ENCODE measurements at regions of chr12 and their contacts with region 1.

Region 1: DNA sequence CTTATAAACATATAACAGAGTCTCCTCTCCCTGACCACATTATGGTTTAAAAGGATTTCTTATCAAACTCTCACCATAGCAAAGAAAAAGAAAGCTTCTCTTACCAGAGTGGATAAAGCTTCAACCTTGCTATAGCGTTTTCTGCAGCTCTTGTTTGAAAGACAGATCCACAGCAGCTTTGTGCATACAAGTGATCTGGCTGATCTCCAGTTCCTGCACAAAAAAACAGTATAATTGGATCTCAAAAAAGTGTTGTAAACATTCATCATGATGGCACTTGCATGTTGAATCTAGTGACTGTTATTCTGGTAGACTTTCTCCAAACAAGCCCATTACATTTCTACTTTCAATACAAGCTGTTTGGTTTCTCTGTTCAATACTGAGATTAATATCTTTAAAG is 178.9 kb upstream of the MGAT4C start:
- DNase-seq: no peak
- H3K4me3 ChIP-seq: no peak overlapping the region
- H3K27ac ChIP-seq: no peak overlapping the region
- H3K4me1 ChIP-seq: no peaks in the 10 kb centered on the region
- H3K27me3 ChIP-seq: no peaks in the 10 kb centered on the region
- CTCF ChIP-seq: no peak
- POLR2A ChIP-seq: no peak

Region 2: DNA sequence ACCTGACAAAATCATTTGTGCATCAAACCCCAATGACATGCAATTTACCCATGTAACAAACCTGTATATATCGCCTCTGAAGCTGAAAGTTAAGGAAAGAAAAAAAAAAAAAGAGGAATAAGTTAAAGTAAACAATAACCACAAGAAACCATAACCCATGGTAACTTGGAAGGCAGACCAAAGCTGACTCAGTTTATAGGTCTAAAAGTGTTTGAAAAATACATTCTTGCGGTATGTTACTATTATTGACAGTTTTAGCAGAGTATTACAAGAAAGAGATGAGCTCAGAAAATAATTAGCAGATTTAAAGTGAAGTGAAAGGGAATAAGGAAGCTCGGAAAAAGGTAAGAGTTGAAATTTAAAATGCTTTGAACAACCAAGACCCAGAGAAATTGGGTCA is 144.4 kb before region 1 on chr12:
- CTCF ChIA-PET with region 1: no interaction called
- POLR2A ChIA-PET with region 1: no interaction called
- dilution Hi-C with region 1: no loop called
- intact Hi-C with region 1: no loop called
- DNase-seq: no peak
- H3K4me3 ChIP-seq: no peak overlapping the region
- H3K27ac ChIP-seq: no peak overlapping the region
- H3K4me1 ChIP-seq: no peaks in the 10 kb centered on the region
- H3K27me3 ChIP-seq: no peaks in the 10 kb centered on the region
- CTCF ChIP-seq: no peak
- POLR2A ChIP-seq: no peak

Region 3: GRCh38 chr12:86376052-86376451 is 59.0 kb before region 1 on chr12:
- CTCF ChIA-PET with region 1: no interaction called
- POLR2A ChIA-PET with region 1: no interaction called
- dilution Hi-C with region 1: no loop called
- intact Hi-C with region 1: no loop called
- DNase-seq: no peak
- H3K4me3 ChIP-seq: no peak overlapping the region
- H3K27ac ChIP-seq: no peak overlapping the region
- H3K4me1 ChIP-seq: no peaks in the 10 kb centered on the region
- H3K27me3 ChIP-seq: no peaks in the 10 kb centered on the region
- CTCF ChIP-seq: no peak
- POLR2A ChIP-seq: no peak

Region 4: DNA sequence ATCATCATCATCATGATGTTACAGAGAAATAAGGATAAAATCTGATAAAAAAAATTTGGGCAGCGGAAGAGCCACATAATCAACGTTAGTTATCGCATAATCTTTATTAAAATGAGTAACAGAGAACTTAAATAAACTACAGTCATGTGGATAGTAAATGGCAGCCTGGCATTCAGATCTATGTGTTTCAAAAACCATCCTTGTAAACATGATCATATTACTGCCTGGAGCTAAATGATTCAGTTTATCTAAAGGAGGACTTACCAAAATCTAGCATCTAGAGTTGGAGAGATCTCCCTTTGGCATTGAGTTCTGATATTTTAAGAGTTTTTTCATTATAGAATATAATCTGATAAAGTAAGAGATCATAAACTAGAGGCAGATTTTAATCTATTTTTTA is 21.2 kb after region 1 on chr12:
- CTCF ChIA-PET with region 1: no interaction called
- POLR2A ChIA-PET with region 1: no interaction called
- dilution Hi-C with region 1: no loop called
- intact Hi-C with region 1: no loop called
- DNase-seq: no peak
- H3K4me3 ChIP-seq: no peak overlapping the region
- H3K27ac ChIP-seq: no peak overlapping the region
- H3K4me1 ChIP-seq: no peaks in the 10 kb centered on the region
- H3K27me3 ChIP-seq: no peaks in the 10 kb centered on the region
- CTCF ChIP-seq: no peak
- POLR2A ChIP-seq: no peak

Region 5: DNA sequence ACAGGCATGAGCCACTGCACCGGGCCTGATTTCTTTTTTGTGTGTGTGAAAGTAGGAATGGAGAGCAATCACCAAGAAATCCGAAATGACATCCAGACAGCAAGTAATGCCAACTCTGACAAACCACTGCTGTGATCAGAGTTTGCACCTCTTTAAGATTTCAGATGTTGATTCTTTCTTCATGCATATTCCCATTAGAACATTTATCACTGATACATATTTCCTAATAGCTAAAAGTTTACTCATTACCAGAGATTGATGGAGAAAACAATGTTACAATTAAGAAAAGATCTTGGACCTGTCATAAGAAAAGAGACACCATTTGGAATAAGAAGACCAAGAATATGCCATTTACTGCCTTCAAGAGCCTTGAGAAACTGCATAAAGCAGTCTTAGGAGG is 38.2 kb after region 1 on chr12:
- CTCF ChIA-PET with region 1: interaction called, 3 read pairs
- POLR2A ChIA-PET with region 1: no interaction called
- dilution Hi-C with region 1: no loop called
- intact Hi-C with region 1: loop called (anchors 1 kb)
- DNase-seq: no peak
- H3K4me3 ChIP-seq: no peak overlapping the region
- H3K27ac ChIP-seq: no peak overlapping the region
- H3K4me1 ChIP-seq: no peaks in the 10 kb centered on the region
- H3K27me3 ChIP-seq: no peaks in the 10 kb centered on the region
- CTCF ChIP-seq: no peak
- POLR2A ChIP-seq: no peak

Region 6: DNA sequence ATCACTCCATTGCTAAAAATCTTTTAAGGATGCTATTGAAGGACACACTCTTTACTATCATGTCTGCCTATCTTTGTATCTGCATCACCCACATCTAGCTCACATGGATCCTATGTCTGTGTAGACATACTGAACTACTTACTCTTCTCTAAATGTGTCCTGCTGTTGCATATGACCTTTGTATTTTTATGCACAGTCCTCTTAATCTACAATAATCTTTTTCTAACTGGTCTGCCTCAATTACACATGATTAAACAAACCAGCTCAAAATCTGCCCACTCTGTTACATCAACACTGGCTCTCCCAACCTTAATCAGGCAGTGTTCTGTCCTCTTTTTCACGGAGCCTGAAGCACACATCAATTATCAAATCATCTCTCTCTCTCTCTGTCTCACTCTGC is 137.4 kb after region 1 on chr12:
- CTCF ChIA-PET with region 1: no interaction called
- POLR2A ChIA-PET with region 1: no interaction called
- dilution Hi-C with region 1: no loop called
- intact Hi-C with region 1: no loop called
- DNase-seq: no peak
- H3K4me3 ChIP-seq: no peak overlapping the region
- H3K27ac ChIP-seq: no peak overlapping the region
- H3K4me1 ChIP-seq: no peaks in the 10 kb centered on the region
- H3K27me3 ChIP-seq: no peaks in the 10 kb centered on the region
- CTCF ChIP-seq: no peak
- POLR2A ChIP-seq: no peak

Measured in endothelial cell of umbilical vein (primary cell).